A549 (cell line): ENCODE measurements at regions of chr6 and their contacts with region 1.

Region 1: DNA sequence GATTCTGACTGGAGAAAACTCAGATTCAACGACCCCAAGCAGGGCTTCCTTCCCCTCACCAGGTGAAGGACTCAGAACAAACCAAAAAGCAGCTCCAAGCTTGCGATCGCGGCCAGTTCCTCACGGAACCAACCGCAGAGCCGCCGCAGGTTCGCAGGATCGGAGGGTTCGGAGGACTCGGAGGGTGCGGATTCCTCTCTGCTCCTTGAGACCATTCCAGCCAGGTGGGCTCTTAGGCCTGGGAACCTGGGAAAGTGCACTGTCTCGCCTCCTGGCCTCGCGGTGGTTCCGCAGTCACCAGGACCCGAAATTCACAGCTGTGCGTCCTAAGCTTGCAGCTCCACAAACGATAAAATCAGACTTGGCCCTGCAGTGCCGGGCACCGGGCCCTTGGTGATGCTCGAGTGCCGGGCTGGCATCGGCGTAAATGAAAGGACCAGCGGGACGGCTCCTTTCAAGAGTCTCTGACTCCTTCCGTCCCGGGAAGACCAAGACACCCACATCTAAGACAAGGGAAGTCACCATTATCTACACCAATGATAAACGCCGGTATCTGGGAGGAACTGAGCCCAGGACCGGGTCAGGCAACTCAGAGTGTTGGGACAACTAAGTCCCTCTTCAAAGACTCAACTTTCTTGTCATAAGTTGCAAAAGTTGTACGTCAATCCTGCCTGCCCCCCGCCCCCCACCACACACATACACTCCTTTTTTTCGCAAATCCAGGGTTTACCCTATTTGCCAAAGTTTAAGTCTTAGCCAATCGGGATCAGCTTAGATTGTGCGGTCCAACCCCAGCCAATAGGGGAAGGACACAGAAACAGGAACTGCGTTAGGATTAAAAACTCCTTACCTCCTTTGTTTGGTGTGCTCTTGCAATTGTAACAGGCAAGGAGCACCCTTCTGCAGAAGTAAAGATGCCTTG is 69.8 kb upstream of the PRSS16 start:
- DNase-seq: peak; percentile 89 to 92
- ATAC-seq: peak; percentile 90 to 93
- H3K4me3 ChIP-seq: peak overlapping the region; percentile 79
- H3K27ac ChIP-seq: peak overlapping the region; percentile 79 to 94
- H3K4me1 ChIP-seq: no peaks in the 10 kb centered on the region
- CTCF ChIP-seq: no peak; the same call in 2 of the 3 replicates
- EP300 ChIP-seq: no peak
- POLR2A ChIP-seq: no peak
- RAD21 ChIP-seq: peak; percentile 22 to 25; a peak in 2 of 5 replicates

Region 2: DNA sequence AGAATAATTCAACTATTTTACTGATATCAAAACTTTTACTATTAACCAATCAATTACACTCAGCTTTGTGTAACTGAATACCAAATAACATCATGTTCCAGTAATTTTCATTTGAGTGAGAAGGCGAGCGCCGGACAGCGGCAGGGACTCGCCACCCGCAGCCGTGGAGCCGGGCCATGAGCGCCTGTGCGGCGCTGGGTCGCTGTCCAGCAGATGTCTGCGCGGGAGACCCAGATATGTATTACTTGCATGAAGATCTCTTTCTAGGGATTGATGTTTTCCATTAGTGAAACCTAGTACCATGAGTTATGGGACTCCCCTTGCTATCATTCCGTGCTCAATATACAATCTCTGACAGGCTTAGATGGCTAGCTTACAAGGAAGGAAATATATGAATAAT is 175.3 kb before region 1 on chr6:
- CTCF ChIA-PET with region 1: no interaction called
- POLR2A ChIA-PET with region 1: no interaction called
- DNase-seq: no peak
- ATAC-seq: no peak
- H3K4me3 ChIP-seq: no peak overlapping the region
- H3K27ac ChIP-seq: no peak overlapping the region
- H3K4me1 ChIP-seq: no peaks in the 10 kb centered on the region
- CTCF ChIP-seq: no peak
- EP300 ChIP-seq: no peak
- POLR2A ChIP-seq: no peak
- RAD21 ChIP-seq: no peak

Region 3: GRCh38 chr6:27157459-27158315 is 20.1 kb before region 1 on chr6:
- CTCF ChIA-PET with region 1: interaction called, 24 read pairs
- POLR2A ChIA-PET with region 1: no interaction called
- DNase-seq: peak; percentile 52 to 87
- ATAC-seq: peak; percentile 88 to 89
- H3K4me3 ChIP-seq: peak overlapping the region; percentile 66
- H3K27ac ChIP-seq: peak overlapping the region; percentile 52 to 71; a peak in 5 of 6 replicates
- H3K4me1 ChIP-seq: peaks cover 3% of the 10 kb centered on the region; the same call in 1 of the 3 replicates
- CTCF ChIP-seq: peak; percentile 28; the same call in 2 of the 3 replicates
- EP300 ChIP-seq: no peak
- POLR2A ChIP-seq: no peak
- RAD21 ChIP-seq: no peak

Region 4: DNA sequence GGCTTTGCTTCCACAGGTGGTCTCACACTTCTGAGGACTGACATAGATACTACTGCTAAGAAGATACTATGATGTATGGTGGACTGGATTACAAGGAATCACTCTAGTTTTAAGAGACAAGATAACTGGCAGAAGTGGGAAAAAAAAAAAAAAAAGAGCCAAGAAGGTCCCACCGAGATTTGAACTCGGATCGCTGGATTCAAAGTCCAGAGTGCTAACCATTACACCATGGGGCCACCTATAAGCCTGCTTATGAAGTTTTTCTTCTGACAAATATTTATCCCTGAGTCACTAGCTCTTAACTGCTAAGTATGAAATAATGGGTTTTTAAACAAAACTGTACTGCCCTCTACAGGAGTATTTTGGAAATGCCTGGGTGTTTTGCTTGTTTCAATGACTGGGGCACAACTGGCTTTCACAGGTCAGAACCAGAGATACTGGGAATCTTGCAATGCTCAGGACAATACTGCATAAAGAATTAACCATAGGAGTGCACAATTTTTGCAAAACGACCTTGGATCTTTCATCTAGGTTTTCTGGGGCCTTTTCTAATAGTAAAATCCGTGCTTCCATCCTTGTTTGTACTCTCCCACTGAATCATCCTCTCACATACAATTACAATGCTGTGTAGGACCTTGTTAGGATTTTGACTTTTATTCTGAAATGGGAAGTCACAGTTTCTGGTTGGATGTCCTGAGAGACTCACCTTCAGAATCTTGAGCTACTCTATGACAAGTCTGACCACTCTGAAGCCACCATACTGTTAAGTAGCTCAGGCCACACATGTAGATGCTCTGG is 618.1 kb after region 1 on chr6:
- CTCF ChIA-PET with region 1: interaction called, 12 read pairs
- POLR2A ChIA-PET with region 1: no interaction called
- DNase-seq: peak; percentile 36 to 86
- ATAC-seq: peak; percentile 40 to 55; a peak in 4 of 6 replicates
- H3K4me3 ChIP-seq: no peak overlapping the region
- H3K27ac ChIP-seq: no peak overlapping the region
- H3K4me1 ChIP-seq: peaks cover 10% of the 10 kb centered on the region
- CTCF ChIP-seq: peak; percentile 70
- EP300 ChIP-seq: no peak
- POLR2A ChIP-seq: no peak
- RAD21 ChIP-seq: peak; percentile 66 to 69